ENCODE measurements at regions of chr18 and their contacts with region 1.

Region 1: DNA sequence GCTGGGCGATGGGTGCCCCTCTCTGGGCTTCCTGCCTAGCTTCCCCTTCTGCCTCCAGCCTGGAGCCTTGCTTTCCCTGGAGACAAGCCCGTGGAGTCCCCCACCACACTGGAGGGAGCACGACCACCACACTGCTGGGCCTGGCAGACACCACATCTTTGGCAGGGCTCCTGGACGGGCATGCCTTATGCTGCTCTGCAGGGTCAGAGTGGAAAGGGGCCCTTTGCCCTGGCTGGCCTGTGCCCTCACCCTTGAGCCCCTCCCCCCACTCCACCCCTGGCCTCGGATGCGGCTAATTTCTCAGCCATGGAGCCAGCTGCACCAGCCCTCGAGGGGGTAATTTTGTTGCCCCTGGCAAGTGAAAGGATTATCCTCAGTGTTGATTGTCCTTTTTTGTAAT is 194.5 kb downstream of the LOXHD1 start:
- DNase-seq: no peak
- ATAC-seq: no peak
- H3K4me3 Mint-ChIP-seq: no peak overlapping the region
- H3K27ac Mint-ChIP-seq: no peak overlapping the region
- H3K4me1 Mint-ChIP-seq: peaks cover 61% of the 10 kb centered on the region
- H3K27me3 Mint-ChIP-seq: peaks cover 4% of the 10 kb centered on the region; the same call in 1 of the 2 replicates
- CTCF ChIP-seq: no peak

Region 2: DNA sequence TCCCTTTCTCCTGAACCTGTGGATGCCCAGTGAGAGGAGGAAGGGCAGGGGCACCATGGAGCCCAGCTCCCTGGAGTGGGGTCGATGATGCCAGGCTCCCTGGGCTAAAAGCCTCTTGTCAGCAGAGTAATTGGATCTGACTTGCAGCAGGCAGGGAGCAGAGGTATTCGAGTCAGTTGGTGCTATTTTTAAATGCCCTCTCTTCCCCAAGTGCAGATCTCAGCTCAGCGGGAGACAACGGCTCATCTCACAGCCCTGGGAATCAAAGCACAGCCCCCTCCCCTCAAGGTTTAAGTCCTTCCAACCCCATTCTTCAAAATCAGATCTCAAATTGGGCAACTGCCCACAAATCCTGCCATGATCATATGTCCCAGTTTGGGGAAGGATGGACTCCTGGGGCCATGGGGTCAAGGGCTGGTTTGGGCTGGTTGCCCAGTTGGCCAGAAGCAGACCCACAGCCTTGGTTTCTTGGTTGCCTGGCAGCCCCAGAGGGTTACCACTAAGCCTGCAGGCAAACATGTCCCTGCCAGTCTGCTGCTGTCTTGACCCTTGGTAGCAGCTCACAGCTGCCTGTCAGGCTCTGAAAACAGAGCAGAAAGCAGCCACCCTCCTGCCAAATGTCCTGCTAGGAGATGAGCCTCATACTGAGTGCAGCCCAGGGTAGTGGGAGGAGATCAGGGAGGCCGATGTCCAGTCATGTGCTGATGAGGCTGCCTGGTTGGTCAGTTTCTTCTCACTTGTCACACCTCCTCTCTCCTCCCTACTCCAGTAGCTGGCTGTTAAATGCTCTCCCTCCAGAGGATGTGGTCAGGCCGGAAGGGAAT is 50.4 kb before region 1 on chr18:
- CTCF ChIA-PET with region 1: interaction called, 12 read pairs
- POLR2A ChIA-PET with region 1: no interaction called
- DNase-seq: no peak
- ATAC-seq: no peak
- H3K4me3 Mint-ChIP-seq: no peak overlapping the region
- H3K27ac Mint-ChIP-seq: peak overlapping the region; percentile 10; the same call in 1 of the 2 replicates
- H3K4me1 Mint-ChIP-seq: peaks cover 58% of the 10 kb centered on the region
- H3K27me3 Mint-ChIP-seq: no peaks in the 10 kb centered on the region
- CTCF ChIP-seq: no peak

Region 3: DNA sequence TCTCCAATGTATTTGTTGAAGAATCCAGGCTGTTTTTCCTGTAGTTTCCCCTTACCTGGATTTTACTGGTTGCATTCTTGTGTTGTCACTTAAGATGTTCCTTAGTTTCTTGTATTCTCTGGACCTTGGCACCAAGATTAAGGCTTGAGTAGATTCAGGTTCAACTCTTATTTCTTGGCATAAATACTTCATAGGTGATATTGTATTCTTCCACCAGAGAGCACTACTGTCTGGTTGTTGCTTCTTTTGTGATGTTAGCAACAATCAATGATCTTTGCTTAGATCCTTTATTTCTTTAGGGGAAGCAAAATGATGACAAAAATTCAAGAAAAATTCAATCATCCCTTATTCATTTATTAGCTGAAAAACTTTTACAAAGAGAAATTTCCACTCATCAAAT is 16.6 kb before region 1 on chr18:
- CTCF ChIA-PET with region 1: interaction called, 18 read pairs
- POLR2A ChIA-PET with region 1: interaction called, 3 read pairs
- DNase-seq: no peak
- ATAC-seq: no peak
- H3K4me3 Mint-ChIP-seq: no peak overlapping the region
- H3K27ac Mint-ChIP-seq: no peak overlapping the region
- H3K4me1 Mint-ChIP-seq: peaks cover 33% of the 10 kb centered on the region
- H3K27me3 Mint-ChIP-seq: peaks cover 12% of the 10 kb centered on the region
- CTCF ChIP-seq: no peak

Region 4: GRCh38 chr18:46518438-46518837 is 55.9 kb after region 1 on chr18:
- CTCF ChIA-PET with region 1: interaction called, 10 read pairs
- POLR2A ChIA-PET with region 1: no interaction called
- DNase-seq: peak; percentile 38
- ATAC-seq: peak; percentile 68
- H3K4me3 Mint-ChIP-seq: no peak overlapping the region
- H3K27ac Mint-ChIP-seq: no peak overlapping the region
- H3K4me1 Mint-ChIP-seq: no peaks in the 10 kb centered on the region
- H3K27me3 Mint-ChIP-seq: peaks cover 2% of the 10 kb centered on the region
- CTCF ChIP-seq: no peak

Region 5: DNA sequence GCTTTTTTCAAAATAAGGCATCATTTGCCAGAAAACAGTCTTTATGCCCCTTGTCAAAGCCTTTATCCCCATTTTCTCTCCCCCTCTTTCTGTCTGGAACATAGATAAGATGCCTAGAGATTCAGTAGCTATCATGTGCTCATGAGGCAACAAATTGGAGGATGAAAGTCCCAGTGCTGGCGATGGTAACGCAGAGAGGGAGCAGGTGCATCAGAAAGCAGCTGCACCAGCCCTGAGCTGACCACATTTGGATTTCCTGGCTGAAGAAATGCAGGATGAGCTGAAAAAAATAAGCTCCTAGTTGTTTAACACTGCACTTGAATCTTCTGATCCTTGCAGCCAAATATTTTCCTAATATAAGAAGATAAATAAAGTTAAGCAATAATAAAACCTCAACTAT is 146.5 kb after region 1 on chr18:
- CTCF ChIA-PET with region 1: no interaction called
- POLR2A ChIA-PET with region 1: no interaction called
- DNase-seq: no peak
- ATAC-seq: no peak
- H3K4me3 Mint-ChIP-seq: no peak overlapping the region
- H3K27ac Mint-ChIP-seq: no peak overlapping the region
- H3K4me1 Mint-ChIP-seq: no peaks in the 10 kb centered on the region
- H3K27me3 Mint-ChIP-seq: no peaks in the 10 kb centered on the region
- CTCF ChIP-seq: no peak